ENCODE measurements at regions of chr1 and their contacts with region 1.

Region 1: DNA sequence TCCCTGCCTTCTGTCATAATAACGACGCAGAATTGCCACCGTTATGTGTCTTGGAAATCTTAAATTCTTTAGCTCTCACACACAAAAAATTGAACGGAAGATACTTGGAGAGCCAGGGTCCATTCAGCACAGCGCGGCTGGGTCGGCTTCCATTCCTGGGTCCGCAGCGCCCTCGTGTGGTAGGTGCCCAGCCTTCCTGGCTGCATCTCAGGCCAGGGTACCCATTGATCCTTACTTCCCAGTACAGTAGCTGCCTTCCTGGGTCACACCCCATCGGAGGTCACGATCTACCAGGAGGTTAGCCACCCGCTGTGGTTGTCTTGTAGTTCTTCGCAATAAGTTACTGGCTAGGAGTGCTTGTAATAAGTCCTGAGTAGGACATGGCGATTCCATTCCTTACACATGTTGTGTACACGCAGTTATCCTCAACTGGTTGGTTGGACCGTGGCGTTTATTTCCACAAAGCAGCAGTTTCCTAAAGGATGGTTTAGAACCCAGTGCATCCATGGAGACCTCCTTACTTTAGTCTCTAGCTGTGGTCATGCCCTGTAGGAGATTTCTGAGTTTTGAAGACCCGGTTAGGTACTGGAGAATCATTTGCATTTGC is 9.9 kb upstream of the MTARC1 start:
- DNase-seq: peak; percentile 62
- ATAC-seq: peak; percentile 100
- H3K4me3 ChIP-seq: no peak overlapping the region
- H3K27ac ChIP-seq: no peak overlapping the region
- H3K4me1 ChIP-seq: no peaks in the 10 kb centered on the region
- H3K27me3 ChIP-seq: no peaks in the 10 kb centered on the region
- CTCF ChIP-seq: peak; percentile 91
- POLR2A ChIP-seq: no peak
- RAD21 ChIP-seq: peak; percentile 97

Region 2: GRCh38 chr1:219837274-219837993 is 939.4 kb before region 1 on chr1:
- CTCF ChIA-PET with region 1: no interaction called
- POLR2A ChIA-PET with region 1: no interaction called
- dilution Hi-C with region 1: no loop called
- in situ Hi-C with region 1: no loop called
- intact Hi-C with region 1: loop called (anchors 5 kb)
- DNase-seq: peak; percentile 54
- ATAC-seq: peak; percentile 72
- H3K4me3 ChIP-seq: no peak overlapping the region
- H3K27ac ChIP-seq: no peak overlapping the region
- H3K4me1 ChIP-seq: no peaks in the 10 kb centered on the region
- H3K27me3 ChIP-seq: peaks cover 2% of the 10 kb centered on the region; the same call in 1 of the 2 replicates
- CTCF ChIP-seq: peak; percentile 51
- POLR2A ChIP-seq: no peak
- RAD21 ChIP-seq: peak; percentile 52

Region 3: GRCh38 chr1:220281159-220281574 is 495.7 kb before region 1 on chr1:
- CTCF ChIA-PET with region 1: no interaction called
- POLR2A ChIA-PET with region 1: no interaction called
- dilution Hi-C with region 1: no loop called
- in situ Hi-C with region 1: no loop called
- intact Hi-C with region 1: loop called (anchors 1 kb)
- DNase-seq: peak; percentile 33
- ATAC-seq: peak; percentile 71
- H3K4me3 ChIP-seq: no peak overlapping the region
- H3K27ac ChIP-seq: no peak overlapping the region
- H3K4me1 ChIP-seq: no peaks in the 10 kb centered on the region
- H3K27me3 ChIP-seq: peaks cover 19% of the 10 kb centered on the region
- CTCF ChIP-seq: peak; percentile 53
- POLR2A ChIP-seq: no peak
- RAD21 ChIP-seq: peak; percentile 63

Region 4: GRCh38 chr1:220527908-220528678 is 248.7 kb before region 1 on chr1 and contains the start of gene MARK1:
- CTCF ChIA-PET with region 1: interaction called, 3 read pairs
- POLR2A ChIA-PET with region 1: no interaction called
- dilution Hi-C with region 1: no loop called
- in situ Hi-C with region 1: no loop called
- intact Hi-C with region 1: loop called (anchors 10 kb)
- DNase-seq: no peak
- ATAC-seq: peak; percentile 88
- H3K4me3 ChIP-seq: peak within 1 kb of the TSS; percentile 44
- H3K27ac ChIP-seq: no peak within 1 kb of the TSS
- H3K4me1 ChIP-seq: peaks cover 2% of the 10 kb centered on the region; the same call in 1 of the 2 replicates
- H3K27me3 ChIP-seq: peaks cover 37% of the 10 kb centered on the region
- CTCF ChIP-seq: no peak
- POLR2A ChIP-seq: no peak
- RAD21 ChIP-seq: no peak
- total RNA-seq, gene MARK1: not detected in 2 replicates

Region 5: DNA sequence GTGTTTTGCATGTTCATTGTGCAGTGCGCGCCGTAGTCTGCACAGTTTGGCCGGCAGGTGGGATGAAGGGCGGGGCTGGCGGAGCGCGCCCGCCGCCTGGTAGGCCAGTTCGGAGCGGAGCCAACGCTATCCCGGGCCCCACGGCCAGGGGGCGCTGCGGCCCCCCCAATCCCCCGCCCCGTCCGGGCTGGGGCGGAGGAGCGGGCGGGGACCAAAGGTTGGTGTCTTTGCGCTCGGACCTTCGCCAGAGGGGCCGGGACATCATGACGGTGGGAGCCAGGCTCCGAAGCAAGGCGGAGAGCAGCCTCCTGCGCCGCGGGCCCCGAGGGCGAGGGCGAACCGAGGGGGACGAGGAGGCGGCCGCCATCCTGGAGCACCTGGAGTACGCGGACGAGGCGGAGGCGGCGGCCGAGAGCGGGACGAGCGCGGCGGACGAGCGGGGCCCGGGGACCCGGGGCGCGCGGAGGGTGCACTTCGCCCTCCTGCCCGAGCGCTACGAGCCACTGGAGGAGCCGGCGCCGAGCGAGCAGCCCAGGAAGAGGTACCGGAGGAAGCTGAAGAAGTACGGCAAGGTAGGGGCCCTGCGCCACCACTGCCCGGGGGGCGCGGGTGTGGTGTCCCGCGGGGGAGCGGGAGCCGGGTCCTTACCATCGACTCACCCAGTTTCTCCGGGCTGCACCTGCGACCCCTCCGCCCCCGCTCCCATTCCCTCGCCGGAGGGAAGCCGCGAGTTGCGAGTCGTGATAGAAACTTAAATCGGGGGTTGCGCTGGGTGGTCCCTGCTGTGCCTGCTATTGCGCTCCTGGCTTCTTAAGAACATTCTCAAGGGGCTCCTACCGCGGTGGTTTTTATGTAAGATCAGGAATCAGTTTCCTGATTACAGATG is 86.4 kb before region 1 on chr1 and contains the start of gene C1orf115:
- CTCF ChIA-PET with region 1: interaction called, 3 read pairs
- POLR2A ChIA-PET with region 1: no interaction called
- dilution Hi-C with region 1: no loop called
- in situ Hi-C with region 1: loop called (anchors 5 kb)
- intact Hi-C with region 1: loop called (anchors 1 kb)
- DNase-seq: peak; percentile 13
- ATAC-seq: peak; percentile 93
- H3K4me3 ChIP-seq: peak within 1 kb of the TSS; percentile 76
- H3K27ac ChIP-seq: no peak within 1 kb of the TSS
- H3K4me1 ChIP-seq: no peaks in the 10 kb centered on the region
- H3K27me3 ChIP-seq: peaks cover 36% of the 10 kb centered on the region
- CTCF ChIP-seq: peak; percentile 68
- POLR2A ChIP-seq: no peak
- RAD21 ChIP-seq: peak; percentile 38
- total RNA-seq, gene C1orf115: under 0.01 and 0.18 TPM in 2 replicates

Region 6: DNA sequence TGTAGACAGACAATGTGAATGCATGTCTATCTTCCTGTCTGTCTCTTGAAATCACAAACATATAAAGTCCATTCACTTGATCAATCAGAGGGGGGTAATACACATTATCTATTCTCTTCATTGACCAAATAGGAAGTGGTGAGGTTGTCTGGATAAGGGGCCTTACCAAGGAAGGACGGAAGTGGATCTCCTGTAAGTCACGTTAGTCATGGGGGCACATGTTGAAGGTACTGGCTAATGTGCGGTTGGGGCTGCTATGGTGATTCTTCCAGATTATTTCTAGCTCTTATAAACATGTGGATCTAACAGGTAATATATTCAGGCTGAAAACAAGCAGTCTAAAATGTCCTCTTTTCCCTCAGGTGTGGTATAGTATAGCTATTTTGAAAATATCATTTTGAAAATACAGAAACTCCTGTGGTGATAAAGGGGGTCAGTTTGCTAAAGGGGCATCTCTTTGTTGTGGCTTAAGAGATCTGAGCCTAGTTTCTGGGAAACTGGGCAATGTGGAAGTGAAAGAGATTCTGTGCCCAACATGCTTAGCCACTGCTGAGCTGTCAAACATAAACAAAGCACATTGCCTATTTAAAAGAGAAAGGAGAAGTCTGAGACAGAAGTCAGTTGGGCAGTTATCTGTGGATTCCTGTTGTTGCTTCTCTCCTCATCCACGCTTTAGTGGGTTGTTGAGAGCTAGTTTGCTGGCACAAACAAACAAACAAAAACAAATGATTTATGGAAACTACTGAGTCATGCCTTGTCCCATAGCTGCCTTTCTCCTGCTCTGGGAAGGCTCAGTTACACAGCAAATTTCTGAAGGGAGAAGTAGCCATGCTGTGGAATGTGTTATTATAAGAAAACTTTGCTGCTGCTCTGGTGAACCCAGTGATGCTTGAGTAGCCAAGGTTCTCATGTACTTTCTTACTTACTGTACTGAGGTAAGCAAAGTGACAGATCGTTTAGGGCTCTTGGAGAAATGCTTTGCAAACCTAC is 269.3 kb after region 1 on chr1:
- CTCF ChIA-PET with region 1: no interaction called
- POLR2A ChIA-PET with region 1: no interaction called
- dilution Hi-C with region 1: no loop called
- in situ Hi-C with region 1: no loop called
- intact Hi-C with region 1: no loop called
- DNase-seq: peak; percentile 38
- ATAC-seq: peak; percentile 90
- H3K4me3 ChIP-seq: no peak overlapping the region
- H3K27ac ChIP-seq: peak overlapping the region; percentile 8; the same call in 1 of the 2 replicates
- H3K4me1 ChIP-seq: 0 out of 2 replicates have a peak, but pooled peaks cover 2% of the 10 kb centered on the region
- H3K27me3 ChIP-seq: no peaks in the 10 kb centered on the region
- CTCF ChIP-seq: no peak
- POLR2A ChIP-seq: no peak
- RAD21 ChIP-seq: no peak